WTC11 (cell line): ENCODE measurements at regions of chr12 and their contacts with region 1.

Region 1: DNA sequence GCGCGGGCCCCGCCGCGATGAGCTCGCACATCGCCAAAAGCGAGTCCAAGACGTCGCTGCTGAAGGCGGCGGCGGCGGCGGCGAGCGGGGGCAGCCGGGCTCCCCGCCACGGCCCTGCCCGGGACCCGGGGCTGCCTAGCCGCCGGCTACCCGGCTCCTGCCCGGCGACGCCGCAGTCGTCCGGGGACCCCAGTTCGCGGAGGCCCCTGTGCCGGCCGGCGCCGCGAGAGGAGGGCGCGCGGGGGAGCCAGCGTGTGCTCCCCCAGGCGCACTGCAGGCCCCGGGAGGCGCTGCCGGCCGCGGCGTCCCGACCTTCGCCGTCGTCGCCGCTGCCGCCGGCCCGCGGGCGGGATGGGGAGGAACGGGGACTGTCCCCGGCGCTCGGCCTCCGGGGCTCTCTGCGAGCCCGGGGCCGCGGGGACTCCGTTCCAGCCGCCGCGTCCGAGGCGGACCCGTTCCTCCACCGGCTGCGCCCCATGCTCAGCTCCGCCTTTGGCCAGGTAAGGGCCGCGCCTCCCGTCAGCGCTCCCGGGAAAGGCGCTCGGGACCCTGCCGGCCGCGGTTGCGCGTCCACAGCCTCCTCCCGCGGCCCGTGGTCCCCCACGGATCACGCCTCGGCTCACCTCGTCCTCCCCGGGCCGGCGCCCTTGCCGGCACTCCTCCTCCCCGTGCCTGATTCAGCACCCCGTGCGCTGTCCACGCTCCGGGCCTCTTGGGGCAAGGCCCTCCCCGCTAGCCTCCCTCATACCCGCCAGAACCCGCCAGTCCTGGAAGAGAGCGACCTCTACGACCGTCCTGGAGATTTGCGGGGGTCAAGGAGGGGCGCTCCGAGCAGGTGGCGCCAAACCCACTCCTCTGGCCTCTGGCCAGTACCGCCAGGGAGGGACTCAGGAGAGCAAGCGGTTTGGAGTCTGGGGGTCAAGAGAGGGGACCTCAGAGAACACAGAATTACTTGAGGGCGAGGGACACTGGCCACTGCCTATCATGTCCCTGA is 711 bp downstream of the CABP1 start:
- DNase-seq: peak; percentile 84
- ATAC-seq: peak; percentile 78
- H3K4me3 Mint-ChIP-seq: peak overlapping the region; percentile 72
- H3K27ac Mint-ChIP-seq: no peak overlapping the region
- H3K4me1 Mint-ChIP-seq: peaks cover 15% of the 10 kb centered on the region
- H3K27me3 Mint-ChIP-seq: peaks cover 20% of the 10 kb centered on the region
- CTCF ChIP-seq: no peak

Region 2: DNA sequence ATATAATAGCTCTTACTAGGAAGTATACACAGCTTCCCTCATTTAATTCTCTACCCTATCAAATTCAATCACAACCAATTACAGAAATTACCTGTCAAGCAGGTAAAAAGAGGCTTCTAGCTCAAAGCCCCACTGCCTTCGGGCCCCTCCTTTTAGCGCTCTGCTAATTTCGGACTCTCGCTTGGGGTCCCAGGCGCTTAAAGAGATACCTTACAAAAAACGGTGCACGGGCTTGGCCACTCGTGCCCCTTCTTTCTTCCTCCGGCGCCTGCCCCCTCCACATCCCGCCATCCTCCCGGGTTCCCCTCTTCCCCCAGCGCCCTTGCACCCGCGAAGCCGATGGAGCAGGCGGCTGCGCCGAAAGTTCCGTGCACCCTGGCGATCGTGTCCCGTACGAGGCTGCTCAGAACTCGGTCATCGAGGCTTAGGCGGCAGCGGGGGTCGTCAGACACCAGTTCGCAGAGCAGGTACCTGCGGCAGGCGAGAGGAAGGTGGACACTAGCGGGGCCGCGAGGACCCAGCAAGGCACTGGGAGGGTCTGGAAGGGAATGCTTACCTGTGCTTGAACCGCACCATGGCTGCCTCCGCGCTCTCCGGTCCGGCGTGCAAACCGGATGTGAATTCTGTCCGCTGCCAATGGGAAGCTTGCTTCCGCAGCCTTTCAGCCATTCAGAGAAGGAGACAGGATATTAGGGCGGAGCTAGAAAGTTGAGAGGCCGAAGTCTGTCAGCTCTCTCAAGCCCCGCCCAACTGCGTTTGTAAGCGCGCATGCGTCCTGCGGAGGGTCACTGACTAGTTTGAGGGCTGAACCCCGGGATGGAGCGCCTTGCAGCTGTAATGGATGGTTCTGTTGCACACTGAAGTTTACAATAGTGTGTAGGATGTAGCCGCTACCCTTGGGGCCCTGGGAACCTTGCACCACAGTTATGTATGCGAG is 60.1 kb before region 1 on chr12 and contains the start of gene POP5:
- CTCF ChIA-PET with region 1: interaction called, 34 read pairs
- POLR2A ChIA-PET with region 1: interaction called, 3 read pairs
- DNase-seq: peak; percentile 98
- ATAC-seq: peak; percentile 91
- H3K4me3 Mint-ChIP-seq: peak within 1 kb of the TSS; percentile 100
- H3K27ac Mint-ChIP-seq: peak within 1 kb of the TSS; percentile 95
- H3K4me1 Mint-ChIP-seq: peaks cover 24% of the 10 kb centered on the region
- H3K27me3 Mint-ChIP-seq: peaks cover 12% of the 10 kb centered on the region
- CTCF ChIP-seq: no peak
- total RNA-seq, gene POP5: 53.9 to 57.7 TPM (median 54.7 TPM) in 3 replicates

Region 3: DNA sequence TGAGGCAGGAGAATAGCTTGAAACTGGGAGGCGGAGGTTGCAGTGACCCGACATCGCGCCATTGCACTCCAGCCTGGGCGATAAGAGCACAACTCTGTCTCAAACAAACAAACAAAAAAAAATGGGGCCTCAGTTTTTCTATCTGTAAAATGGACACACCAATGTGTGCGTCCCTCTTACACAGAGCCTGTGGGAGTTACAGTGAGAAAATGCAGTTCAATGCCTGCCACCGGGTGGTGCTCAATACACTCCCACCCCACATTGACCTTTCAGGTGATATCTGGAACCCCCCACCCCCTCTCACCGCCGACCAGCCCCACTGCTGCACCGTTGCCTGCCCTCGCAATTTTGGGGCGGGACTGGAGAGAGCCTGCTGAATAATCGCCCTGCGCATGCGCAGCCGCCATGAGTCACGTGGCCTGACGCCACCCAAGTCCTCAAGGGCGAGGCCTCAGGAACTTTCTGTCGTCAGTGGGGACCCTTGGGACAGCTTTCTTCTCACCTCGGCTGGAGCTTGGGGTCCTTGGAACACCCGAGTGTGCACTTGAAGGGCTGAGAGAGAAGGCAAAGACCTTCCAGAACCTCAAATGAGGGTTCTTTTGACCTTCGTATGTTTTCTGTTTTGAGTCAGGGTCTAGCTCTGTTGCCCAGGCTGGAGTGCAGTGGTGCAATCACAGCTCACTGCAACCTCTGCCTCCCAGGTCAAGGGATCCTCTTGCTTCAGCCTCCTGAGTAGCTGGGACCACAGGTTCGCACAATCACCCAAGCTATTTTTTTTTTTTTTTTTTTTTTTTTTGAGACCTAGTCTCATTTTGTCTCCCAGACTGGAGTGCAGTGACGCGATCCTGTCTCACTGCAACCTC is 15.3 kb before region 1 on chr12:
- CTCF ChIA-PET with region 1: interaction called, 15 read pairs
- POLR2A ChIA-PET with region 1: no interaction called
- DNase-seq: peak; percentile 69
- ATAC-seq: peak; percentile 54
- H3K4me3 Mint-ChIP-seq: no peak overlapping the region
- H3K27ac Mint-ChIP-seq: no peak overlapping the region
- H3K4me1 Mint-ChIP-seq: peaks cover 6% of the 10 kb centered on the region
- H3K27me3 Mint-ChIP-seq: no peaks in the 10 kb centered on the region
- CTCF ChIP-seq: no peak

Region 4: GRCh38 chr12:120710031-120710804 is 69.1 kb after region 1 on chr12 and contains the start of gene UNC119B:
- CTCF ChIA-PET with region 1: no interaction called
- POLR2A ChIA-PET with region 1: no interaction called
- DNase-seq: peak; percentile 72
- ATAC-seq: peak; percentile 89
- H3K4me3 Mint-ChIP-seq: peak within 1 kb of the TSS; percentile 79
- H3K27ac Mint-ChIP-seq: peak within 1 kb of the TSS; percentile 64
- H3K4me1 Mint-ChIP-seq: peaks cover 26% of the 10 kb centered on the region
- H3K27me3 Mint-ChIP-seq: no peaks in the 10 kb centered on the region
- CTCF ChIP-seq: no peak
- total RNA-seq, gene UNC119B: 49.9 to 53.3 TPM (median 50.3 TPM) in 3 replicates